HepG2 (cell line): ENCODE measurements at regions of chr5 and their contacts with region 1.

Region 1: GRCh38 chr5:82165740-82166530 is 112.2 kb downstream of the RPS23 start:
- DNase-seq: peak; percentile 71
- ATAC-seq: peak; percentile 100
- H3K4me3 ChIP-seq: no peak overlapping the region
- H3K27ac ChIP-seq: no peak overlapping the region
- H3K4me1 ChIP-seq: peaks cover 14% of the 10 kb centered on the region
- H3K27me3 ChIP-seq: no peaks in the 10 kb centered on the region
- CTCF ChIP-seq: peak; percentile 88
- EP300 ChIP-seq: no peak
- POLR2A ChIP-seq: no peak
- RAD21 ChIP-seq: peak; percentile 73

Region 2: DNA sequence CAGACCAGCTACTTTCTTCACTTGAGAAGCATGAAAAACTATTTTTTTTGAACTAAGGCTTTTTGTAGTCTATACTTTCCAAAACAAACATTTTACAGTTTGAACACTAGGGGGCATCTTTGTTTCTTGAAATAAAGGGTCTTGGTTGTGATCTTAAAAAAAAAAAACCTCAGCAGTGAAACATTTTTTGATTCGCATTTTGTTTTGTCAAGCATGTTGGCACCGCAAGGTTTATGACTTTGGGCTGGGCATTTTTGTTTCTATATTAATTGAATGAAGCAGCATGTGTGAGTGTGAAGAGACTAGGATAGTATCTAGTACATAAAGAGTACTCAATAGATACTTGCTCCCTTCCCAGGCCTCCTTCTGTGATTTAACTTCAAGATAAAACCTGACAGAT is 740.4 kb before region 1 on chr5:
- CTCF ChIA-PET with region 1: interaction called, 8 read pairs
- POLR2A ChIA-PET with region 1: no interaction called
- in situ Hi-C with region 1: loop called (anchors 10 kb)
- intact Hi-C with region 1: loop called (anchors 1 kb)
- DNase-seq: peak; percentile 32
- ATAC-seq: peak; percentile 53; the same call in 2 of the 3 replicates
- H3K4me3 ChIP-seq: no peak overlapping the region
- H3K27ac ChIP-seq: no peak overlapping the region
- H3K4me1 ChIP-seq: peaks cover 13% of the 10 kb centered on the region; the same call in 1 of the 2 replicates
- H3K27me3 ChIP-seq: no peaks in the 10 kb centered on the region
- CTCF ChIP-seq: peak; percentile 44
- EP300 ChIP-seq: no peak
- POLR2A ChIP-seq: no peak
- RAD21 ChIP-seq: 0 out of 2 replicates have a peak, but pooled peaks have one; percentile 26

Region 3: DNA sequence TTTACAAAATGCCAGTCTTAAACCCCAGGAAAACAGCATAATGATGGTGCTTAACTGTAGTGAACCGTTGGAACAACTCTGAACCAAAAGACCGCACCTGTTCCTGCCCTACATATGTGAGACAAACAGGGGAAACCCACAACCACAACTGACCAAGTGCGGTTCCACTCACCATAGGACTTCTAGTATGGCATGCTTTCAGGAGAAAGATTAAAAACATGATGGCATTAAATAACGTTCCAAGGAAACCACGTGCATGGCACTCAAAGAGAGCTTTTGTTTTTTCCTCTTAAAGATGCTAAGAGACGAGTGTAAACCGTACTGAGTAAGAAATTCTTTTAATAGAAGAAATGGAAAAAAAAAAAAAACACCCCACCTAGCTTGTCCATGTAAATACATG is 534.8 kb before region 1 on chr5:
- CTCF ChIA-PET with region 1: no interaction called
- POLR2A ChIA-PET with region 1: no interaction called
- in situ Hi-C with region 1: no loop called
- intact Hi-C with region 1: loop called (anchors 10 kb)
- DNase-seq: no peak
- ATAC-seq: no peak
- H3K4me3 ChIP-seq: no peak overlapping the region
- H3K27ac ChIP-seq: no peak overlapping the region
- H3K4me1 ChIP-seq: no peaks in the 10 kb centered on the region
- H3K27me3 ChIP-seq: no peaks in the 10 kb centered on the region
- CTCF ChIP-seq: no peak
- EP300 ChIP-seq: no peak
- POLR2A ChIP-seq: no peak
- RAD21 ChIP-seq: no peak

Region 4: DNA sequence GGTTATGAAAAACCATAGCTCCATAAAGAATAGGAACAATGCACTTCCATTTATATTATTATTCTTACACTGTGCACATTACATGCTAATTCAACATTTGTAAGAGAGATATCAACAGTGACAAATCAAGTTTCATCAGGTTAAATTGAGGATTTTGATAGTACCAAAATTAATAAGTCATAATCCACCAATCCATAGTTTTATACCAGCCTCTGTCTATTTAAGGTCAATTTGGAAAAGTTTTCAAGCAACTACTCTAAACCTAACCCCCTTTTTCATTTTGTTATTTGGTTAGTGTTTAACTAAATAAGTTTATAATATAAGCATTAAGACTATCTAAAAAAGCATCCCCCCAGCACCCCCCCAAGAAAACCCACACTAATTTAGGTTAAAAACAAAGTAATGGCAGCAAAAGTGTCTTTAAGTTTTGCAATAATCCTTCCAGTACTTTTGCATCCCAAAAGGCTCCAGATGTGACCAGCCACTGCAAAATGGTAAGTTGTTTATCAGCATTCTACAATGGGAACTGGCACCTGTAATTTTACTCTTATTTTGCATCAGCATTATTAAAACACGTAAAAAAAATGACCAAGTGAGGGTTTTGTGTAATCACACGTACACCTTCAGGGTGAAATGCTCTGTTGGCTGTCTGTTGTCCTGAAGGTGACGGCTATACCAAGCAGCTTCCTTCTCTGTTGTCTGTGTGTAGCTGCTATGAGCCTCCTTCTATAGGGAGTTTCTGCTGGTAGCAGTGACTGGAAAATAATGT is 378.3 kb before region 1 on chr5:
- CTCF ChIA-PET with region 1: no interaction called
- POLR2A ChIA-PET with region 1: no interaction called
- in situ Hi-C with region 1: no loop called
- intact Hi-C with region 1: loop called (anchors 2 kb)
- DNase-seq: no peak
- ATAC-seq: no peak
- H3K4me3 ChIP-seq: no peak overlapping the region
- H3K27ac ChIP-seq: no peak overlapping the region
- H3K4me1 ChIP-seq: no peaks in the 10 kb centered on the region
- H3K27me3 ChIP-seq: peaks cover 0 to 2% of the 10 kb centered on the region in 2 experiments; a peak in 2 of 5 replicates
- CTCF ChIP-seq: no peak
- EP300 ChIP-seq: no peak
- POLR2A ChIP-seq: no peak
- RAD21 ChIP-seq: no peak

Region 5: GRCh38 chr5:81971712-81972495 is 194.0 kb before region 1 on chr5 and contains the start of gene ATG10:
- CTCF ChIA-PET with region 1: no interaction called
- POLR2A ChIA-PET with region 1: no interaction called
- in situ Hi-C with region 1: no loop called
- intact Hi-C with region 1: loop called (anchors 2 kb)
- DNase-seq: peak; percentile 73
- ATAC-seq: peak; percentile 97
- H3K4me3 ChIP-seq: peak within 1 kb of the TSS; percentile 73 to 86 (median 84)
- H3K27ac ChIP-seq: peak within 1 kb of the TSS; percentile 95
- H3K4me1 ChIP-seq: peaks cover 26% of the 10 kb centered on the region; the same call in 1 of the 2 replicates
- H3K27me3 ChIP-seq: no peaks in the 10 kb centered on the region; a peak in 1 of 5 replicates
- CTCF ChIP-seq: no peak
- EP300 ChIP-seq: no peak
- POLR2A ChIP-seq: peak; percentile 82 to 91
- RAD21 ChIP-seq: no peak; the same call in none of the 2 replicates
- total RNA-seq, gene ATG10: 5.6 and 5.7 TPM in 2 replicates

Region 6: GRCh38 chr5:82107267-82107666 is 58.7 kb before region 1 on chr5:
- CTCF ChIA-PET with region 1: no interaction called
- POLR2A ChIA-PET with region 1: no interaction called
- in situ Hi-C with region 1: no loop called
- intact Hi-C with region 1: loop called (anchors 1 kb)
- DNase-seq: no peak
- ATAC-seq: no peak
- H3K4me3 ChIP-seq: no peak overlapping the region
- H3K27ac ChIP-seq: no peak overlapping the region
- H3K4me1 ChIP-seq: peaks cover 9% of the 10 kb centered on the region
- H3K27me3 ChIP-seq: no peaks in the 10 kb centered on the region
- CTCF ChIP-seq: no peak
- EP300 ChIP-seq: no peak
- POLR2A ChIP-seq: no peak
- RAD21 ChIP-seq: no peak

Region 7: DNA sequence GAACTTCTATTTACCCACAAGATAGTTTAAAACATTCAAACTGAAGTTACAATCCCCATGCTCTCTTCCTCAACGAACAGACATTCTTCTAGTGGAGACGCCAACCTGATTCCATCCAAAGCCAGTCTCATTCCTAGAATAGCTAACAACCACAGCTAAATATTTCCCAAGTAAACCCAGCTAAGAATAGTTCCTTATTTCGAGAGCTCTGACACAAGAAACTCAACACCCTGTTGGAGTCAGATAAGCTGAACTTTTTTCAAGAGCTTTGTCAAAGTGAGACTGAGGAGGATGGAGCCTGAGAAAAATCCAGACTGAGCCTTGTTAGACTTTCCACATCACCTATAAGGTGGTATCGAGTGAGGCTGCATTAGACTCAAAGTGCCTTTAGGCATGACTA is 168.9 kb after region 1 on chr5:
- CTCF ChIA-PET with region 1: no interaction called
- POLR2A ChIA-PET with region 1: no interaction called
- in situ Hi-C with region 1: no loop called
- intact Hi-C with region 1: no loop called
- DNase-seq: no peak
- ATAC-seq: no peak
- H3K4me3 ChIP-seq: no peak overlapping the region
- H3K27ac ChIP-seq: no peak overlapping the region
- H3K4me1 ChIP-seq: no peaks in the 10 kb centered on the region
- H3K27me3 ChIP-seq: peaks cover 0 to 2% of the 10 kb centered on the region in 2 experiments; a peak in 3 of 5 replicates
- CTCF ChIP-seq: no peak
- EP300 ChIP-seq: no peak
- POLR2A ChIP-seq: no peak
- RAD21 ChIP-seq: no peak